Mammary epithelial cell (primary cell): ENCODE measurements at regions of chr12 and their contacts with region 1.

Region 1: GRCh38 chr12:79344855-79345847 is 345.6 kb downstream of the PAWR start:
- DNase-seq: peak; percentile 37
- H3K4me3 ChIP-seq: no peak overlapping the region
- H3K27ac ChIP-seq: no peak overlapping the region
- H3K4me1 ChIP-seq: no peaks in the 10 kb centered on the region
- H3K27me3 ChIP-seq: no peaks in the 10 kb centered on the region
- CTCF ChIP-seq: peak; percentile 82 to 85

Region 2: DNA sequence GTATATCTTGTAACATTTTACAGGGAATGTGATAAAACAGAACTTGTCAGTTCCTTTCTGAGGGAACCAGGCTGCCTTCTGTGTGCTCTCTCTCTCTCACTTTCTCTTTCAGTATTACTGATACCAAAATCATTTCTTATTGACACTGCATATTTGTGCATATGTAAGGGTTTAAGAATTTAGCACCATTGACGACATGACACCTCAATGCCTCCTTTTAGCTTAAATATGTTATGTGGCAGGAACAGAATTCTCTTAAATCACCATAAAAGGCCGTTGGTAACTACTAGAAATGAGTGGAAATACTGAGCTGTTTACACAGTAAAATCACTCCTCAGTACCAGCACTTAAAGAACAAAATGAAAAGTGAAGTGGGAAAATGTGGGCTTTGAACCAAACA is 938.3 kb before region 1 on chr12:
- CTCF ChIA-PET with region 1: interaction called, 20 read pairs
- dilution Hi-C with region 1: no loop called
- in situ Hi-C with region 1: no loop called
- intact Hi-C with region 1: no loop called
- DNase-seq: no peak
- H3K4me3 ChIP-seq: no peak overlapping the region
- H3K27ac ChIP-seq: no peak overlapping the region
- H3K4me1 ChIP-seq: no peaks in the 10 kb centered on the region
- H3K27me3 ChIP-seq: no peaks in the 10 kb centered on the region
- CTCF ChIP-seq: no peak

Region 3: GRCh38 chr12:78501825-78502224 is 843.3 kb before region 1 on chr12:
- CTCF ChIA-PET with region 1: no interaction called
- dilution Hi-C with region 1: no loop called
- in situ Hi-C with region 1: no loop called
- intact Hi-C with region 1: no loop called
- DNase-seq: no peak
- H3K4me3 ChIP-seq: no peak overlapping the region
- H3K27ac ChIP-seq: no peak overlapping the region
- H3K4me1 ChIP-seq: no peaks in the 10 kb centered on the region
- H3K27me3 ChIP-seq: no peaks in the 10 kb centered on the region
- CTCF ChIP-seq: no peak

Region 4: GRCh38 chr12:78562368-78563205 is 782.6 kb before region 1 on chr12:
- CTCF ChIA-PET with region 1: no interaction called
- dilution Hi-C with region 1: no loop called
- in situ Hi-C with region 1: no loop called
- intact Hi-C with region 1: loop called (anchors 10 kb)
- DNase-seq: peak; percentile 9
- H3K4me3 ChIP-seq: no peak overlapping the region
- H3K27ac ChIP-seq: no peak overlapping the region
- H3K4me1 ChIP-seq: no peaks in the 10 kb centered on the region
- H3K27me3 ChIP-seq: no peaks in the 10 kb centered on the region
- CTCF ChIP-seq: peak; percentile 39 to 57

Region 5: DNA sequence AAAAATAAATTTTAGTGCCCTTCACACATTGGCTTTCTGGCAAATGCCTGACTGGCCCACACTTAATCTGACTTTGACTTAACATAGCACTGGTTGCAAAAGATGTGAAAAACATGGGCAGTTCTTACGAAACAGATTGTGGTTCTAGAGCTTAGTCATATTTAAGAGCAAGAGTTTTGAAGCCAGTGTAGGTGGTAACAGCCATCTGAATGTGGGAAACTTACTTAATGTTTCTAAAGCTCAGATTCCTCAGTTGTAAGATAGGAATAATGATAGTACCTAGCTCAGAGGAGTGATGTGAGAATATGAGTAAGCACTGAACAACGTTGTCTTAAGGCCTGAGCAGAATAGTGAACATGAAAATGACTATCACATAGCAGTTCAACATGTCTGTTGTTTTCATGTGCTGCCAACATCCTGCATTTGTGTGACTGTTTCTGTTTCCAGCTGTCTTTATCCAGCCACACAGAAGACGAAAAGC is 217.8 kb before region 1 on chr12:
- CTCF ChIA-PET with region 1: interaction called, 4 read pairs
- dilution Hi-C with region 1: no loop called
- in situ Hi-C with region 1: no loop called
- intact Hi-C with region 1: loop called (anchors 10 kb)
- DNase-seq: peak; percentile 95
- H3K4me3 ChIP-seq: no peak overlapping the region
- H3K27ac ChIP-seq: peak overlapping the region; percentile 10
- H3K4me1 ChIP-seq: peaks cover 19% of the 10 kb centered on the region
- H3K27me3 ChIP-seq: no peaks in the 10 kb centered on the region
- CTCF ChIP-seq: no peak